ENCODE measurements at regions of chr18 and their contacts with region 1.

Region 1: GRCh38 chr18:63730773-63731172 is 28.0 kb downstream of the SERPINB11 start:
- DNase-seq: peak; percentile 68 to 80
- H3K4me3 ChIP-seq: no peak overlapping the region
- H3K27ac ChIP-seq: peak overlapping the region; percentile 39; the same call in 1 of the 2 replicates
- H3K4me1 ChIP-seq: peaks cover 10% of the 10 kb centered on the region
- H3K27me3 ChIP-seq: no peaks in the 10 kb centered on the region
- CTCF ChIP-seq: no peak

Region 2: DNA sequence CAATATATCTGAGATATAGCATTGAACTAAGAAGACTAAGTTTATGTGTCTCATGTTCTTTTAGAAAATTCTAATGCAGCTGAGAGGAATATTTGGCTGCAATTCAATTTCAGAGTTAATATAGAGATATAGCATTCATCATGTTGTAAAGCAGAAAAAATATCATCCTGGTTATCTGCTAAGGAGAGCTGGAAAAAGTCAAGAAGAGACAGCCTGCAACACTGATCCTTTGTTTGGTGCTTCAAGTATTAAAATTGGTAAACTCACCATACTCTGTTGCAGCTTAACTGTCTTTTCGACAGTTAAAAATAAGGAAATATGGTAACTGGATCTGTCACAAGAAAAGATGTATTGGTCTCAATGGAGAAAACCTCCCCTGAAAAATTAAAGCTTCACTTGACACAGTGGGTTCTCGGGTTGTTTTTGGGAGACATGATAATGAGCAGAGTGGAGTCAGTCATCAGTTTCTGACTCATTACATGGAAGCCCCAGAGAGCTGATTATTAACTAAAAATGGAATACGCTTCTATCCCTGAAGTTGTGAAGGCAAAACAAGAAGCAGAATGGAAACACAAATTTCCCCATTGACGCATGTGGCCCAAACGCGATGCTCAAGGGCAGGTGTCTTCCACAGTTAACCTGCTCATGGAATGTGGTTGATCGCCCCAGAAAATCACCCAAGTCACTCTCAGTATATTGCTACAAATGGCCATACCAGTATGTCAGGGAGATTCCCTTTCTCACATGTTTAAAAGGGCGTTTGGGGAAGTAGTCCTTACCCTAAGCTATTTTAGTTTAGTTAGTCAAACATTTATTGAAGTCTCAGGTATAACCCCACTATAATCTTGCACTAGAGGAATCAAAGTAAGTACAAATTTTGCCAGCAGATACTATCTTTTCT is 419.4 kb before region 1 on chr18:
- CTCF ChIA-PET with region 1: no interaction called
- POLR2A ChIA-PET with region 1: no interaction called
- intact Hi-C with region 1: no loop called
- DNase-seq: no peak
- H3K4me3 ChIP-seq: no peak overlapping the region
- H3K27ac ChIP-seq: no peak overlapping the region
- H3K4me1 ChIP-seq: peaks cover 4% of the 10 kb centered on the region; the same call in 1 of the 2 replicates
- H3K27me3 ChIP-seq: no peaks in the 10 kb centered on the region
- CTCF ChIP-seq: no peak

Region 3: DNA sequence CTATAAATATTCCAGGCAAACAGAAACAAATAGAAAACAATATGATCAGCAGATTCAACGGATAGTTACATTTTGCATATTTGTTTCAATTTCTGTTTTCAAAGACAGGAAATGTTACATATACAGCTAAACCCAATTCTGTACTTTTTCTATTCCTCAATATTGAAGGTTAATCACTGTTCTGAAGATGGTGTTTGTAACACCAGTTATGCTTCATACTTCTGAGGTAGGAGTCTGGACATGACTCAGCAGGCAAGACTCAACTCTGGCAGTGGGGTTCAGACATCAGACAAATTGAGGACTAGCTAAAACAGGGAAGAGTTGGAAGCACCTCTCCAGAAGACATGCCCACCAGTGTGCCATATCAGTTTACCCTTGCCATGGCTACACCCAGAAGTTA is 127.0 kb before region 1 on chr18:
- CTCF ChIA-PET with region 1: no interaction called
- POLR2A ChIA-PET with region 1: no interaction called
- intact Hi-C with region 1: loop called (anchors 2 kb)
- DNase-seq: peak in 1 of 2 experiments; percentile 43
- H3K4me3 ChIP-seq: no peak overlapping the region
- H3K27ac ChIP-seq: peak overlapping the region; percentile 88
- H3K4me1 ChIP-seq: peaks cover 27% of the 10 kb centered on the region
- H3K27me3 ChIP-seq: no peaks in the 10 kb centered on the region
- CTCF ChIP-seq: no peak

Region 4: GRCh38 chr18:63683152-63683551 is 47.6 kb before region 1 on chr18:
- CTCF ChIA-PET with region 1: no interaction called
- POLR2A ChIA-PET with region 1: interaction called, 5 read pairs
- intact Hi-C with region 1: loop called (anchors 2 kb)
- DNase-seq: peak; percentile 64 to 96
- H3K4me3 ChIP-seq: peak overlapping the region; percentile 38; the same call in 1 of the 2 replicates
- H3K27ac ChIP-seq: peak overlapping the region; percentile 98
- H3K4me1 ChIP-seq: peaks cover 29% of the 10 kb centered on the region
- H3K27me3 ChIP-seq: no peaks in the 10 kb centered on the region
- CTCF ChIP-seq: no peak

Region 5: GRCh38 chr18:65279668-65280305 is 1549.0 kb after region 1 on chr18:
- CTCF ChIA-PET with region 1: no interaction called
- POLR2A ChIA-PET with region 1: interaction called, 14 read pairs
- intact Hi-C with region 1: no loop called
- DNase-seq: no peak
- H3K4me3 ChIP-seq: no peak overlapping the region
- H3K27ac ChIP-seq: no peak overlapping the region
- H3K4me1 ChIP-seq: no peaks in the 10 kb centered on the region
- H3K27me3 ChIP-seq: no peaks in the 10 kb centered on the region
- CTCF ChIP-seq: no peak

Measured in PC-9 (cell line).